Mammary epithelial cell (primary cell): ENCODE measurements at regions of chr12 and their contacts with region 1.

Region 1: DNA sequence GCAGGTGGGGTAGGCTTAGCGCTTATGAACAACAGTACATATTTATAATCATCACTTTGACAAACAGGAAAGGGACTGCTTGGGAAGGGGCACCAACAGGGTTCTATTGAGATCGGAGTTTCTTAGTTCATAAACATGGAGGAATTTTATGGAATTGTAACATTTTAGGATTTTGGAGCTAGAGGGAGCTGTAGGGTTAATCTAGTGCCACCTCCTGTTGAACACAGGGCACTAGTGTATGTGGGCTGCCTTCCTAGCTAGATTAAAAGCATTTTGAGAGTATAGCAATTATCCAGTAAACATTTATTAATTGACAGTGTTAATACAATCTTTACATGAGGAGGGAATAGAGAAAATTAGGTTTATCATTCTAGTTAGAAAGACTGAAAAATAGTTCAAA is 23.1 kb upstream of the TBC1D30 start:
- DNase-seq: no peak
- H3K4me3 ChIP-seq: no peak overlapping the region
- H3K27ac ChIP-seq: no peak overlapping the region
- H3K4me1 ChIP-seq: no peaks in the 10 kb centered on the region
- H3K27me3 ChIP-seq: no peaks in the 10 kb centered on the region
- CTCF ChIP-seq: peak in 1 of 2 donors; percentile 52

Region 2: DNA sequence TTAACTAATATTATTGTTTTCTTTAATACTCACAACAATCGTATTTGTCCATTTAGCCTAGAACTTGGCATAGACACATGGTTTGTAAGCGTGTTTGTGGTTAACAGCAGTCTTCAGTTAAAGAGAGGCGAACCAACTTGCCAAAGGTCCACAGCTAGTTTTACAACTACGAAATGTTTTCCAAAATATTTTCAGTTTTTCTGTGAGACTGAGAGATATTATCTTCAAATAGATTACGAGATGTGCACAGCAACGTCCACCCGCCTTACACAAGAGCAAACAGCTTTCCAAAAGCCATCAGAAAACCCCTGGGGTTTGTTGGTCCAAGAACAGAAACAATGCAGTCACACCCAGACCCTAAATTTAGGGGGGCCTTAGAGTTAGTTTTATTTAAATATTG is 249.7 kb before region 1 on chr12:
- CTCF ChIA-PET with region 1: no interaction called
- dilution Hi-C with region 1: no loop called
- in situ Hi-C with region 1: no loop called
- intact Hi-C with region 1: loop called (anchors 2 kb)
- DNase-seq: no peak
- H3K4me3 ChIP-seq: no peak overlapping the region
- H3K27ac ChIP-seq: no peak overlapping the region
- H3K4me1 ChIP-seq: no peaks in the 10 kb centered on the region
- H3K27me3 ChIP-seq: no peaks in the 10 kb centered on the region
- CTCF ChIP-seq: no peak

Region 3: DNA sequence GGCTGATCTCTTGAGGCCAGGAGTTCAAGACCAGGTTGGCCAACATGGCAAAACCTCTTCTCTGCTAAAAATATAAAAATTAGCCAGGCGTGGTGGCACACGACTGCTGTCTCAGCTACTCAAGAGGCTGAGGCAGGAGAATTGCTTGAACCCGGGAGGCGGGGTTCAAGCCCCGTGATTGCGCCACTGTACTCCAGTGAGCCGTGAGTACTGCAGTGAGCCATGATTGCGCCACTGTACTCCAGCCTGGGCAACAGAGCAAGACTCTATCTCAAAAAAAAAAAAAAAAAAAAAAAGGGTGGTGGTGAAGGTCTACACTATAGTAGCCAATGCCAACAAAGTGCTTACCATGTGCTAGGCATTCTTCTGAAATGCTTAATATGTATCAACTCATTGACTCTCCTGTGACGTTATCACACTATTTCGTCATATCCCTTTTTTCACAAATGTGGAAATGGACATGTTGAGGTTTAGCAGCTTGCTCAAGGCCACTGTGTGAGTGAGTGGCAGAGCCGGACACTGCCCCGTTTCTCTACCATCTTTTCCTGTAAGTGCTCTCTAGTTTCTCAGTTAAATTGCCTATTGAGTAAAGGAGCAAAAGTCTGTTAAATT is 101.8 kb before region 1 on chr12:
- CTCF ChIA-PET with region 1: no interaction called
- dilution Hi-C with region 1: no loop called
- in situ Hi-C with region 1: no loop called
- intact Hi-C with region 1: no loop called
- DNase-seq: no peak
- H3K4me3 ChIP-seq: no peak overlapping the region
- H3K27ac ChIP-seq: no peak overlapping the region
- H3K4me1 ChIP-seq: no peaks in the 10 kb centered on the region
- H3K27me3 ChIP-seq: no peaks in the 10 kb centered on the region
- CTCF ChIP-seq: no peak

Region 4: DNA sequence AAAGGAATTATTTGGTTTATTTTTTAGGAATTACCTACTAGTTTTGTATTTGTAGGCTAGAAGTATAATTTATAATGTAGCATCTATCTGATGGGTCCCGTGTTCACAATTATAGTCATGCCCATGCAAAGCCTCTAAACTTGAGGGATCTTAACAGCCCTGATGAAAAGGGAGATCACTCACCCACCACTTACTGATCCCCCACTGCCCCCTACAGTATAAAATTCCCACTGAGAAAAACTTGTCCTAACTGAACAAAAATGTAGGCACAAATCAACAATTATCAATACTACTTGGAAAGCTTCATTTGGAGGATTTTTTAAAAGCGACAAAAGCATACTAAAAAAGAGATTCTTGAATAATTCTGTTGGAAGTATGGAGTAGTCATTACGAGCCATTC is 298.8 kb after region 1 on chr12:
- CTCF ChIA-PET with region 1: no interaction called
- dilution Hi-C with region 1: no loop called
- in situ Hi-C with region 1: loop called in 1 of 2 experiments (anchors 10 kb)
- intact Hi-C with region 1: loop called (anchors 2 kb)
- DNase-seq: no peak
- H3K4me3 ChIP-seq: no peak overlapping the region
- H3K27ac ChIP-seq: no peak overlapping the region
- H3K4me1 ChIP-seq: no peaks in the 10 kb centered on the region
- H3K27me3 ChIP-seq: peaks cover 7% of the 10 kb centered on the region
- CTCF ChIP-seq: peak; percentile 20 to 44

Region 5: DNA sequence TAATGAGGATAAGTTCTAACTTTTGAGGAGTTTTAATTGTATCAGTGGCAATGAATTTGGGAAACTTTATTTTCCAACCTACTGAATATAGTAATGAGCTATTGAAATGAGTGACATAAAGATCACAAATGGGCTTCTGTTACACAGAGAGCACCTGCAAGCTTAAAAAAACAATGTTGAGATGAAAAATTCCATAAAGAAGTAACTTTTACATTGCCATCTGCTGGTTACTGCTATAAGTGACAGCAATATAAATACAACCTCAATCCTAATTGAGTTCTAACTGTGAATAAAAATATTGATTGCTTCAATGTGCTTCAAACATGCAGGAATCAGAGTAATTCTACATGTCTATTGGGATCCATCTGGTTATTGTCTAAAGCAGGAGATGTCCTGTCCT is 305.6 kb after region 1 on chr12:
- CTCF ChIA-PET with region 1: no interaction called
- dilution Hi-C with region 1: no loop called
- in situ Hi-C with region 1: loop called in 1 of 2 experiments (anchors 10 kb)
- intact Hi-C with region 1: no loop called
- DNase-seq: no peak
- H3K4me3 ChIP-seq: no peak overlapping the region
- H3K27ac ChIP-seq: no peak overlapping the region
- H3K4me1 ChIP-seq: no peaks in the 10 kb centered on the region
- H3K27me3 ChIP-seq: peaks cover 4% of the 10 kb centered on the region
- CTCF ChIP-seq: peak; percentile 32 to 54

Region 6: DNA sequence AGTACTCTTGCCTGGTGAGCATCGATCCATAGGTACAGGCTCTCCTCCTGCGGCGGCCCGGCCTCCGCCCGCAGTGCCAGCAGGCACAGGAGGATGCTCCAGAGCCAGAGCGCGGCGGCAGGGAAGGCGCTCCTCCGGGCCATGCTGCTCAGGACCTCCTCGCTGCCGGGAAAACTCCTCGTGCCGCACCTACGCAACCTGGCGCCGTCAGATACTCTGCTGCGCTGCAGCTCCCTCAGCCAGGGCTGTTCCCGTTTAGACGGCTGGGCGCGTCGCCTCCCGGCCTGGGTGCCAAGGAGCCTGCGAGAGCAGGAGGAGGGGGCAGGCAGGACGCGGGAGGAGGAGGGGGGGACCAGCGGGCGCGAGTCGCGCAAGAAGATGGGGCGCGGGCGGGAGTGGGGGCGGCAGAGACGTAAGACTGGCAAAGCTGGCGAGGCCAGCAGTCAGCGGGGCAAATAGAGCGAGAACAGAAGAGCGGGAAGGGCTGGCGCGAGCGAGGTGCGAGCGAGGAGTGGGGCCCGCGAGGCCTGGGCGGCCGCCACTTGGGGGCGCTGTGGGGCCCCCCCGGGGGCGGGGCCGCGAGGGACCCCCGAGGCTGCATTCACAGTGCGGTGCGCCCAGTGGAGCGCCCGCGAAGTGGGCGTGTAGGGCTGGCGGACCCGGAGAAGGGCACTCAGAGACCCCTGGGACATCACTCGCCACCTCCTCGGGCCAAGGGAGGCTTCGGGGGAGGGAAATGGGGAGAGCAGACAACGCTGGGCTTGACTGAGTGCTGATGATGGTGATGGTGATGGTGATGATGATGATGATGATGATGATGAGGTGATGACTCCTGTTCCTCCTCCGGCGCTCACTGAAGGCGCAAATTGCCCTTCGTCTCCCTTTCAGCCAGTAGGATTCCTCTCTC is 319.9 kb after region 1 on chr12 and contains the start of gene WIF1:
- CTCF ChIA-PET with region 1: no interaction called
- dilution Hi-C with region 1: no loop called
- in situ Hi-C with region 1: loop called in 1 of 2 experiments (anchors 10 kb)
- intact Hi-C with region 1: loop called (anchors 1 kb)
- DNase-seq: peak; percentile 37
- H3K4me3 ChIP-seq: peak within 1 kb of the TSS in 2 of 3 experiments; percentile 28 to 33
- H3K27ac ChIP-seq: no peak within 1 kb of the TSS
- H3K4me1 ChIP-seq: peaks cover 10% of the 10 kb centered on the region
- H3K27me3 ChIP-seq: peaks cover 21% of the 10 kb centered on the region
- CTCF ChIP-seq: peak; percentile 11 to 13
- total RNA-seq, gene WIF1: not detected